AG04450 (cell line): ENCODE measurements at regions of chr6 and their contacts with region 1.

Region 1: GRCh38 chr6:118283766-118284165 is 264.3 kb upstream of the PLN start:
- DNase-seq: peak; percentile 43
- H3K4me3 ChIP-seq: no peak overlapping the region
- H3K27ac ChIP-seq: no peak overlapping the region
- H3K27me3 ChIP-seq: peaks cover 2% of the 10 kb centered on the region
- CTCF ChIP-seq: peak; percentile 87

Region 2: GRCh38 chr6:118249680-118250079 is 34.1 kb before region 1 on chr6:
- CTCF ChIA-PET with region 1: no interaction called
- POLR2A ChIA-PET with region 1: no interaction called
- DNase-seq: no peak
- H3K4me3 ChIP-seq: no peak overlapping the region
- H3K27ac ChIP-seq: no peak overlapping the region
- H3K27me3 ChIP-seq: peaks cover 5% of the 10 kb centered on the region
- CTCF ChIP-seq: no peak

Region 3: DNA sequence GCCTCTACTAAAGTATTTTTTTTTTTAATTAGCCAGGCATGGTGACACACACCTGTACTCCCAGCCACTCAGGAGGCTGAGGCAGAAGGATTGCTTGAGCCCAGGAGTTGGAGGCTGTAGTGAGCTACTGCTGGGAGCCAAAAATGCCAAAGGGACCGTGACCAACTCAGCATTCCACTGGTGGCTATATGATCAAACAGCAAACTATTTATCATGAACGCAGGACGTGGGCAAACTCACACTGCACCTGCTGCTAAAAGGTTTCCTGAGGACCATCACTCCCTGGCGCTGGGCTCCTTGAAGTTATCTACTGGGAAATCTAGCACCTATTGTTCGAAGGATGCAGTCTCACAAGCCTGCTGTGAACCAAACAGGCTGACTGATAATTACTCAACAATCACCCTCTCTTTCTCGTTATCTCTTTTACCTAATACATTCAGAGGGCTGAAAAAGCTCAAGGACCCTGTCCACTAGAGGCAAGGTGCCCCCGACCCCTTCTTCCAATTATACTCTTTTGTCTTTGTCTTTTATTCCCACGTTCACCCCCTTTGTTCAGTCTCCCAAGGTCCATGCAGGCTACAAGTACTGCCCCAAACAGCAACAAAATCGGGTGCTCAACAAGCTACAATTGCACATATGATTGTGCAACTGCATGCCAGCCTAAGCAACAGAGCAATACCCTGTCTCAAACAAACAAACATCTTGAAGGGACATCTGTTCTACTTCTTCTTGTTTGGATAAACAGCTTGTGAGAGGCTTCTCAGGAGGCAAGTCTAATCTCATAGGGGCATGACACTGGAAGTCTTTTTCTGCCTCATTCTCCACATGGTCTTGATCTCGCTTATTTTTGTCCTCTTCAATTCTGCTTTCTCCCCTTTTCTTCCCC is 216.6 kb after region 1 on chr6:
- CTCF ChIA-PET with region 1: interaction called, 16 read pairs
- POLR2A ChIA-PET with region 1: no interaction called
- DNase-seq: no peak
- H3K4me3 ChIP-seq: no peak overlapping the region
- H3K27ac ChIP-seq: no peak overlapping the region
- H3K27me3 ChIP-seq: no peaks in the 10 kb centered on the region
- CTCF ChIP-seq: no peak

Region 4: DNA sequence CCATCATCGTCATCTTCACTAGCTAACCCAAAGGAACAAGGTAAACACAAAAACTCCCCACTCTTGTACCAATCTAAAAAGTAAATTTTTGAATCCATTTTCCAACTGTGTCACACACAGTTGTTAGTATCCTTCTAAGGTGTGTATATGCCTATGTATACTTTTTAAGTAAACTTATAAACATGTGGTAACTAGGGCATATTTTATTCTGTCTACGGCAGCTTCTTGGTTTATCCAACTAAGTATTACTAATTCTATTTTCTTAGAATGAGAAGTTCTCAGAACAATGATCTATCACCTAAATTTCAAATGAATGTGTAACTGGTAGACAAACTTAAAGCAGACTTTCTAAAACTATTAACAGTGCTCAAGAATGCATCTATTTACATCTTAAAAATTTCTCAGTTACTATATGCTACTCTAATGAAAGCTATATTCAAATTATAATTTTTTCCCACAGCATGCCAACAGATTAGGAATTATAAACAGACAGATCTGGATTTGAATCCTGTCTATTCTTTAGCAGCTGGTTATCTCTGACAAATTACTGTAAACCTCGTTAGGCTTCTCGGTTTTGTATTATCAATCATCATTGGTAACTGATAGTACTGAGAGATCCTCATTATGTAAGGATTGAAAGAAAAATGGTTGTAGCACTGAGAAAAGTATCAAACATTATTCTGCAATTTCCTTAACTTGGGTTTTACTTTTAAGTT is 262.6 kb after region 1 on chr6:
- CTCF ChIA-PET with region 1: interaction called, 87 read pairs
- POLR2A ChIA-PET with region 1: no interaction called
- DNase-seq: no peak
- H3K4me3 ChIP-seq: no peak overlapping the region
- H3K27ac ChIP-seq: no peak overlapping the region
- H3K27me3 ChIP-seq: no peaks in the 10 kb centered on the region
- CTCF ChIP-seq: no peak

Region 5: DNA sequence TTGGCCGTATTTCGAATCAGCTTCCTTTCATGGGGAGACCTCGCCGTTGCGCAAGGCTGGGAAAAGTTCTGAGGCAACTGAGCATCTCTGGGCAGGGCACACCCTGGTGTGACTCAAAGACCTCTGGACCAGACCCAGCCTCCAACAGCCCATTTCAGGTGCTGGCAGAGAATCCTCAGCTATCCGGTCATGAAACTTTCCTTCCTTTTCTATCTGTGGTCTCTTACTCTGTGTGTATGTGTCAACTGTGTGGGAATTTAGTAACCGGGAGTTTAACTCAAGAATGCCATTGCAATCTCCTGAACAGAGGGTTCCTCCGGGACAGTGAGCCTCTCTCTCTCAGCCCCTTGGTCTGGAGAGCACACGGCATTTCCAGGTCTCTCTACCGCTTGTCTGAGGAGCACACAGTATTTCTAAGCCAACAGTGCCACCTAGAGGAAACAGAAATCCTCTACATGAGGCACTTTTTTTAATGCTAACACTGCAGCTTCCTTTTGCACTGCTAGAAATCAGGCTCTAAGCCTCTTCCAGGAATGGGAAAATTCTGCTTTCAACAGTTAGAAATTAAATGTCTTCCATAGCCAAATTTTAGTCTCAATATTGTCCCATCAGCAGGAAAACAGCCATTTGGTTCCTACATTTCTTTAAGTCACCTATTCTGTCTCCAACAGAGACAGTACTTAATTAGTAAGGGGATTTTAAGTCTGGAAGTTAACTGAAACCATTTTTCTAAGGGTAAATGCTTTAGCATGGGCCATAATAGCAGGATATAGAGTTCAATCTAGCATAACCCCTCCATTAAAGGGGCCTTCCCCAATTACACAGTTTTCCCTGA is 297.0 kb after region 1 on chr6:
- CTCF ChIA-PET with region 1: interaction called, 93 read pairs
- POLR2A ChIA-PET with region 1: no interaction called
- DNase-seq: peak; percentile 30
- H3K4me3 ChIP-seq: no peak overlapping the region
- H3K27ac ChIP-seq: no peak overlapping the region
- H3K27me3 ChIP-seq: no peaks in the 10 kb centered on the region
- CTCF ChIP-seq: peak; percentile 68

Region 6: DNA sequence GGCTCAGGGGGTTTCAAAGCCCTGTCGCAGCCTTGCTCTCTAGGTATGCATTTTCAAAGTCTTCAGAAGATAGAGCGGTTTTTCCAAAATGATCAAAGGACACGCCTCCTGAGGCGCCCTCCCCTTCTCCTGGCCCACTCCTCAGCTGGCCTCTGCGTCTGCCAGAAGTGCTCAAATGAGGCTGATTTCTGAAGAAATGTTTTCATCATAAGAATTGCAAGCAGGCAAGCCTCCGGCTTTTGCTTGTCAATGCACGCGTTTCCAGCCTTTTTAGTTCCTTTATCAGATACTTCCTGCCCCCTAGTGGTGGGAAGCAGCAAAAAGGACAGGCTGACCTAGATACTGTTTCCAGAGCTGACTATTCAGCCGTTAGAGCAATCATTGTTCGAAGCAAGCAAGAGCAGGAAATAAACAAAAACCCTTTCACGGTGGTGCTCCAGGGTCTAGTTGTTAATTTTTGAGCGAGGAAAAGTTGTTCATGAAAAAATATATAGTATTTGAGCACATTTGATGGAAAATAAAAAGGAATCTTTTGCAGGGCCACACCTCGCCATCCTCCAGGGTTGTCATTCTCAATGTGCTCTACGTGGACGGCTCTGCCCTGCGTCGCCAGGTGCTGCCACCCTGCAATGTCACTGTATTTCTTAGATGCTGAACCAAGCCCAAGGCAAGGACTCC is 516.8 kb after region 1 on chr6:
- CTCF ChIA-PET with region 1: interaction called, 23 read pairs
- POLR2A ChIA-PET with region 1: no interaction called
- DNase-seq: peak; percentile 69
- H3K4me3 ChIP-seq: peak overlapping the region; percentile 31; the same call in 1 of the 2 replicates
- H3K27ac ChIP-seq: no peak overlapping the region
- H3K27me3 ChIP-seq: no peaks in the 10 kb centered on the region
- CTCF ChIP-seq: peak; percentile 96